ENCODE measurements at regions of chr1 and their contacts with region 1.

Region 1: GRCh38 chr1:35192853-35193664 is at the start of gene SFPQ:
- DNase-seq: peak; percentile 91 to 100 (median 96)
- ATAC-seq: peak; percentile 86 to 89 (median 88)
- H3K4me3 ChIP-seq: peak within 1 kb of the TSS; percentile 95 to 96
- H3K4me3 Mint-ChIP-seq: peak within 1 kb of the TSS; percentile 94 to 95 (median 94)
- H3K27ac ChIP-seq: peak within 1 kb of the TSS; percentile 98
- H3K27ac Mint-ChIP-seq: peak within 1 kb of the TSS; percentile 94 to 96
- H3K4me1 ChIP-seq: peaks cover 30 to 33% of the 10 kb centered on the region in 2 experiments
- H3K4me1 Mint-ChIP-seq: peaks cover 42 to 46% (median 43%) of the 10 kb centered on the region in 3 donors
- H3K27me3 ChIP-seq: no peaks in the 10 kb centered on the region
- H3K27me3 Mint-ChIP-seq: no peaks in the 10 kb centered on the region
- total RNA-seq, gene SFPQ: 287 to 589 (median 319) TPM

Region 2: GRCh38 chr1:35210321-35211119 is 17.5 kb after region 1 on chr1:
- CTCF ChIA-PET with region 1: no interaction called
- POLR2A ChIA-PET with region 1: interaction called in 1 of 2 experiments, 11 read pairs
- DNase-seq: no peak
- ATAC-seq: no peak
- H3K4me3 ChIP-seq: no peak overlapping the region
- H3K4me3 Mint-ChIP-seq: no peak overlapping the region
- H3K27ac ChIP-seq: no peak overlapping the region
- H3K27ac Mint-ChIP-seq: no peak overlapping the region
- H3K4me1 ChIP-seq: no peaks in the 10 kb centered on the region
- H3K4me1 Mint-ChIP-seq: peaks cover 0 to 4% (median 0%) of the 10 kb centered on the region in 3 donors
- H3K27me3 ChIP-seq: peaks cover 0 to 1% of the 10 kb centered on the region in 2 experiments
- H3K27me3 Mint-ChIP-seq: no peaks in the 10 kb centered on the region

Measured in T-cell (primary cell).